Stomach (tissue), 19 donors: ENCODE measurements at regions of chr20 and their contacts with region 1.

Region 1: GRCh38 chr20:31569163-31570020 is 35.7 kb upstream of the ID1 start:
- DNase-seq: peak; percentile 68 to 83
- H3K4me3 ChIP-seq: no peak overlapping the region
- H3K27ac ChIP-seq: peak overlapping the region; percentile 57 to 97 (median 93)
- H3K4me1 ChIP-seq: peaks cover 51 to 80% (median 61%) of the 10 kb centered on the region in 4 donors
- H3K27me3 ChIP-seq: no peaks in the 10 kb centered on the region
- CTCF ChIP-seq: peak in 5 of 7 experiments; percentile 54 to 87 (median 73)
- EP300 ChIP-seq: no peak
- POLR2A ChIP-seq: no peak

Region 2: GRCh38 chr20:31605031-31605901 is 35.9 kb after region 1 on chr20 and contains the start of gene ID1:
- intact Hi-C with region 1: loop called (anchors 5 kb)
- DNase-seq: peak; percentile 95 to 98
- H3K4me3 ChIP-seq: peak within 1 kb of the TSS; percentile 57 to 85 (median 81)
- H3K27ac ChIP-seq: peak within 1 kb of the TSS; percentile 87 to 96 (median 94)
- H3K4me1 ChIP-seq: peaks cover 32 to 73% (median 71%) of the 10 kb centered on the region in 4 donors
- H3K27me3 ChIP-seq: peaks cover 0 to 18% (median 5%) of the 10 kb centered on the region in 3 donors
- CTCF ChIP-seq: no peak
- EP300 ChIP-seq: no peak
- POLR2A ChIP-seq: peak in 2 of 4 donors; percentile 52 to 94
- total RNA-seq, gene ID1: 315 to 475 (median 378) TPM